ENCODE measurements at regions of chr3 and their contacts with region 1.

Region 1: GRCh38 chr3:45986303-45986982 is 9.2 kb downstream of the FYCO1 start:
- DNase-seq: peak in 1 of 2 donors; percentile 79
- ATAC-seq: peak; percentile 86
- H3K4me3 ChIP-seq: no peak overlapping the region
- H3K27ac ChIP-seq: peak overlapping the region; percentile 96 to 100
- H3K4me1 ChIP-seq: peaks cover 20 to 22% of the 10 kb centered on the region in 2 donors
- H3K27me3 ChIP-seq: no peaks in the 10 kb centered on the region

Region 2: DNA sequence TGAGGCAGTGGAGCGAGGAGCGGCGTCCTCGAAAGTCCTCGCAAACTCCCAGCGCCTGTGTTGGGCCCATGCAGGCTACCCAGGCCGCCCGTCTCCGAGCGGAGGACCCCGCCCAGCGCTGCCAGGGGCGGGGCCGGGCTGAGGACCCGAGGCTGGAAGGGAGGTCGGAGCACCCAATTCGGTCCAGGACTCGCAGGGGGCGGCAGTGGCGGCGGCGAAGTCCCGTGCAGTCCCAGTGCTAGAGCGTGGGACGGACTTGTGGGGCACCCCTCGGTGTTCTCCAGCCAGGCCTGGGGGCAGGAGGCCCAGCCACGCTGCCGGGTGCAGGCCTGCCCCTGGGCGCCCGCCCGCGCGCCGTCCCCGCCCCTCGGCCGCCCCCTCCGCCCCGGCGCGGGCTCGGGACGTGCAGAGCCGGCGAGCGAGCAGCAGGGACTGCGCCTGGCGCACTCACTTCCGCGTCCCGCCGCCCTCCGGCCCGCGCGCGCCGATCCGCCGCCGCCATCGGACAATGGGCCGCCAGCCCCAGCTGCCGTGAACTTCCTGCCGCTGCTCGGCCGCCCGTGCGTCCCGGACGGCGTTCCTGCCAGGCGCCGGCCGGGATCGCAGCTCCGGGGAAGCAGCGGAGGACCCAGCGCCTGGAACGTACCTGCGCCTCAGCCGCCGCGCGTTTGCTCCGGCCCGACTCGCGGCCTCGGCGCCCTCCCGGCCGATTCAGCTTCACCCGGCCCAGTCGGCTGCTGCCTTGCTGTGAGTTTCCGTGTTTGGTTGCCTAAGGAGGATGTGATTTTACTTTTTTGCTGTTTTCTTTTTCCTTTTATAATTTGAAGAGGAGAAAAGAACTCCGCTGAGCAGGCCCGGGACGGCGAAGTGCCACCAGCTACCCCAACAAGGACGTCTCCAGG is 392.5 kb before region 1 on chr3:
- intact Hi-C with region 1: loop called in 1 of 2 experiments (anchors 10 kb)
- DNase-seq: peak; percentile 85 to 90
- ATAC-seq: peak; percentile 83
- H3K4me3 ChIP-seq: peak overlapping the region; percentile 52 to 62
- H3K27ac ChIP-seq: peak overlapping the region; percentile 37 to 70
- H3K4me1 ChIP-seq: no peaks in the 10 kb centered on the region
- H3K27me3 ChIP-seq: no peaks in the 10 kb centered on the region

Region 3: DNA sequence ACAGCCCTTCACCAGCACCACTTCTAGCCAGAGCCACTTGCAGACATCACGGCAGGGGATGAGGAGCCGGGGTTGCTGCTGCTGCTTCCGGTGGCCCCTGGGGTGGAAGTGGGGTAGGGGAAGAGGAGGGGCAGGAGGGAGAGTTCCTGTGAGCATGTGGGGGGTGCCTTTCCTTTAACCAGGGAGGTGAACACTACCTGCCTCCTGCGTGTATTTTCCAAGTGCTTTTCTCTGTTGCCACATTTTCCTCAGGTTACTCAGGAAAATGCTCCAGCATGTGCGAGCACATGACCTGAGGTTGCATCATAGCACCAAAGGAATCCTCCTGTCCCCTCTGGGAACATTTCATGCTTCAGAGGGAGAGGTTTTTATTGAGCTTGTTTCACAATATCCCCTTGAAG is 309.4 kb before region 1 on chr3:
- intact Hi-C with region 1: loop called in 1 of 2 experiments (anchors 10 kb)
- DNase-seq: no peak
- ATAC-seq: no peak
- H3K4me3 ChIP-seq: no peak overlapping the region
- H3K27ac ChIP-seq: no peak overlapping the region
- H3K4me1 ChIP-seq: no peaks in the 10 kb centered on the region
- H3K27me3 ChIP-seq: no peaks in the 10 kb centered on the region

Region 4: DNA sequence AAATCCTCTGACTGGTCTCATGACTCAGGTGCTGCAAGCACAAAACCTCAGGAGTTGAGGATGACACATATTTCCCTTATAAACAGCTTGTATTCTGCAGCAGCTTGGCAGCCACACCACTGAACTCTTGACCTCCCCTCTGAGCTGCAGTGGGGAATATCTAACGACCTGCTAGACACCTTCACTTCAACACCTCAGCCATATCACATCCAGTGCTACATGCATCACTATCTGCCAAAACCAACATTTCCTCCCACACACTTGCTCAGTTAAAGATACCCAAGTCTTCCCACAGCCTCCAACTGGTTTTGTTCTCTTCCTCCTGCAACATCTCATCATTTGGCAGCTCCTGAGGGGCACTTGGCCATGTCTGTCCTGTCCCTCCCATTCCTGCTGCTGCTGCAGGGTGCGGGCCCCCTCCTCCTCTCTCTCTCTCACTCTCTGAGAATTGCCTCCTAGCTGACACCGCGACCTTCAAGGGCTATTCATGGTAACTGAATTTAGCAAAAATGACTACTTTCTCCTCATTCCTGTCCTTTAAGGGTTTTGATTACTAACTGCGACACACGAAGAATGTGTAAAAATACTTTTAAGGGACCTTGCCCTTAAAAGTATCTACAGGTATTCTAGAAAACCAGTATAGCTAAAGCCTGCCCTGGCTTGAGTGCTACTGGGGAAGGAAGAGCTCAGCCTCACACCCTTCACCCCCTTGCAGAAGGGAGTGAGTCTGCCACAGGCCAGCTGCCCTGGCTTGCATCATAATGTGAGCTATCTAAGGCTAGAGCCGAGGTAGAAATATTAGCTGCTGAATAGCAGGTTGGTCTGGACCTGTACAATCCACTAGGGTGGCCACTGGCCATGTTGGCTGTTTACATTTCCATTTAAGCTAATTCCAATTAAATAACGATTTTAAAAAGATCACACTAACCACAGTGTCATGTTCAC is 105.1 kb before region 1 on chr3:
- intact Hi-C with region 1: no loop called
- DNase-seq: no peak
- ATAC-seq: no peak
- H3K4me3 ChIP-seq: no peak overlapping the region
- H3K27ac ChIP-seq: no peak overlapping the region
- H3K4me1 ChIP-seq: no peaks in the 10 kb centered on the region
- H3K27me3 ChIP-seq: no peaks in the 10 kb centered on the region

Region 5: DNA sequence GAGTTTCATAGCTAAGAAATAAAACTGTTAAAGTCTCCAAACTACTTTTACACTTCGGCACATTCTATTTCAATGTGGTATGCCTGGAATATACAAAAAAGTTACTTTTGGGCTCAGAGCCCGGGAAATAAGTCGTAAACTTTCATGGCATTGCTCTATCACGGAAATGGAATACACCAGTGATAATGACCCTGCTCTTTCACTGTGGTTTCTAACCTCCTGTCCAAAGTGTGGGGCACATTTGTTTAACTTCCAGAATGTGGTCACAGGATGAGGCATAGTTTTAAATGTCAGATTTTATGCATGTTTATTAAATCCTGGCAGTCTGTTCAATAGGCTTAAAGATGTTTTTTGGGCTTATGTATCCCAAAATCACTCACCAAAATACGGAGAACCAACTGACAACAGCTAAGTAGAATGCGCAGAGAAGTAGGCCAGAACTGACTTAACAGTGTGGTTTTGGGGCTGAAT is 38.1 kb before region 1 on chr3:
- intact Hi-C with region 1: no loop called
- DNase-seq: no peak
- ATAC-seq: no peak
- H3K4me3 ChIP-seq: no peak overlapping the region
- H3K27ac ChIP-seq: peak overlapping the region in 1 of 2 donors; percentile 26
- H3K4me1 ChIP-seq: peaks cover 0 to 3% of the 10 kb centered on the region in 2 donors
- H3K27me3 ChIP-seq: no peaks in the 10 kb centered on the region

Measured in aorta (tissue), 5 donors.